Esophagus muscularis mucosa (tissue), 4 donors: ENCODE measurements at regions of chr10 and their contacts with region 1.

Region 1: GRCh38 chr10:93916257-93917063 is 22.7 kb downstream of the SLC35G1 start:
- DNase-seq: no peak
- H3K4me3 ChIP-seq: peak overlapping the region; percentile 17 to 36 (median 26)
- H3K27ac ChIP-seq: no peak overlapping the region
- H3K4me1 ChIP-seq: peaks cover 0 to 20% (median 17%) of the 10 kb centered on the region in 4 donors
- H3K27me3 ChIP-seq: no peaks in the 10 kb centered on the region
- CTCF ChIP-seq: peak; percentile 65 to 68 (median 68)
- EP300 ChIP-seq: no peak
- POLR2A ChIP-seq: no peak

Region 2: DNA sequence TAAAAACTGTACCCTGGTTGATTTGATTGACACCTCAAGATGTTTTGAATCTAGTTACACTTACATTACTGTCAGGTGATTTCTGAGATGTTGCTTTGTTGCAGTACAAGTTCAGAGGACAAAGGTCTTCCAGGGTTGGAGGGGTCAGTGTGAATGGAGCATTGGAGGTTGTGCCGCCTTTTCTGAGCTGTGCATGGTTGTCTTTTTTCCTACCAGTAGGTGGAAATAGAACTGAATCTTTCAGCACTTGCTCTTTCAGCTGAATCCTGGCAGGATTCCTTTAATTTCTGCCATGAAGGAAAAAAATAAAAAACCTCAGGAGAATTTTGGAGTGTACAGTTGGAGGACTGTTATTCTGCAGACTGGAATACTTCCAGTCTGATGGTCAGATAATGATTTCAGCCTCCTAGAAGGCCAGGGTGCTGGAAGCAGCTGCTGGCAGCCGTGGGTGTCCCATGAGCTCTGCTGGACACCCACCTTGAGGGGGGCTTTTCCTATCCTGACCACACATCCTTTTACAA is 159.9 kb after region 1 on chr10:
- intact Hi-C with region 1: loop called (anchors 10 kb)
- DNase-seq: no peak
- H3K4me3 ChIP-seq: peak overlapping the region in 1 of 4 donors; percentile 15
- H3K27ac ChIP-seq: peak overlapping the region; percentile 43 to 67 (median 54)
- H3K4me1 ChIP-seq: peaks cover 23 to 39% (median 27%) of the 10 kb centered on the region in 4 donors
- H3K27me3 ChIP-seq: no peaks in the 10 kb centered on the region
- CTCF ChIP-seq: peak; percentile 60 to 71 (median 67)
- EP300 ChIP-seq: no peak
- POLR2A ChIP-seq: no peak

Region 3: GRCh38 chr10:94320285-94320914 is 403.9 kb after region 1 on chr10:
- intact Hi-C with region 1: loop called (anchors 2 kb)
- DNase-seq: no peak
- H3K4me3 ChIP-seq: no peak overlapping the region
- H3K27ac ChIP-seq: no peak overlapping the region
- H3K4me1 ChIP-seq: peaks cover under 1 to 43% (median 34%) of the 10 kb centered on the region in 4 donors
- H3K27me3 ChIP-seq: no peaks in the 10 kb centered on the region
- CTCF ChIP-seq: peak; percentile 78 to 90 (median 84)
- EP300 ChIP-seq: no peak
- POLR2A ChIP-seq: no peak

Region 4: DNA sequence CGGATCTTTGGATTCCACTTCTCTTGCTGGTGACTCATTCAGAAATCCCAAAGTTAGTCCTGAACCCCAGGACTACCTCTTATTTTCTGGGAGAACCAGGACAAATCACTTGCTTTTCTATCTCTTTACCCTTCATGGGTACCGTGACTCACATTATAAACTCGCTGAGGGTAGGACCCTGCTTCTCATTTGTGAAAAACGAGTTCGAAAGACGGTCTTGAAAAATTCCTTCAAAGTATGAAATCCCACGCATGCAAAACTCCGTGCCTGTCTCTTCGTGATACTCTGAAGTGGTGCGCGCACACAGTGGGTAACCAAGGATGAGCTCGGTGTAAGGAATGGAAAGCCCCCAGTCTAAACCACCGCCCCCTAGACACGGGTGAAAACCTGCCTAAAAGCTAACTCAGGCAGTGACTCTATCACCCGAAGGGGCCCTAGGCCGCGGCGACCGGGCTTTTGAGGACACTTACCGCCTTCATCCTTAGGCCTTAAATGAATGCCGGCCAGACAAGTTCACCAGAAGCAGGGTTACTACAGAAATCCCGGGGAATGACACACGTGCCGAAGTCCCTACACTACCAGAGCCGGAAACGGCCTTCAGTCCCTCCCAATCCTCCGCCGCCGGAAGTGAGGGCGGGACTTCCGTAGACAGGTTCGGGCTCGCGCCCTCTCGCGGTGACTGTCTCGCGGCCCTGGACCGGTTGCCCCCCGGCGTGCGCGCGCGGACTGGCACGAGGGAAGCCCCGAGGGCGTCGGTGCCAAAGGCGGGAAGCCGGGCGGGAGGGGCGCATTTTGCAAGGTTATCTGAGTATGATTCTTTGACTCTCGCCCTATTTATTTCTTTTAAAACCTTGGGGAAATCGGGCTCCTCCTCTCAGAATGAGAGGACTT is 446.1 kb after region 1 on chr10 and contains the start of gene NOC3L:
- intact Hi-C with region 1: loop called (anchors 2 kb)
- DNase-seq: peak; percentile 98
- H3K4me3 ChIP-seq: peak within 1 kb of the TSS; percentile 69 to 88 (median 78)
- H3K27ac ChIP-seq: peak within 1 kb of the TSS; percentile 69 to 86 (median 82)
- H3K4me1 ChIP-seq: peaks cover 18 to 34% (median 28%) of the 10 kb centered on the region in 4 donors
- H3K27me3 ChIP-seq: no peaks in the 10 kb centered on the region
- CTCF ChIP-seq: peak; percentile 83 to 91 (median 90)
- EP300 ChIP-seq: no peak
- POLR2A ChIP-seq: no peak
- total RNA-seq, gene NOC3L: 18.1 to 23.3 (median 20.7) TPM